CD8-positive, alpha-beta T cell (primary cell): ENCODE measurements at regions of chr3 and their contacts with region 1.

Region 1: GRCh38 chr3:161310649-161311423 is 60.5 kb downstream of the SPTSSB start:
- DNase-seq: peak; percentile 3 to 88 (median 42)
- ATAC-seq: peak; percentile 76
- H3K4me3 ChIP-seq: no peak overlapping the region
- H3K4me3 Mint-ChIP-seq: peak overlapping the region; percentile 58
- H3K27ac ChIP-seq: peak overlapping the region in 1 of 2 experiments; percentile 38
- H3K27ac Mint-ChIP-seq: peak overlapping the region; percentile 85
- H3K4me1 ChIP-seq: peaks cover 47% of the 10 kb centered on the region
- H3K4me1 Mint-ChIP-seq: peaks cover 64% of the 10 kb centered on the region
- H3K27me3 ChIP-seq: peaks cover 0 to 4% of the 10 kb centered on the region in 2 experiments
- H3K27me3 Mint-ChIP-seq: no peaks in the 10 kb centered on the region
- CTCF ChIP-seq: no peak

Region 2: DNA sequence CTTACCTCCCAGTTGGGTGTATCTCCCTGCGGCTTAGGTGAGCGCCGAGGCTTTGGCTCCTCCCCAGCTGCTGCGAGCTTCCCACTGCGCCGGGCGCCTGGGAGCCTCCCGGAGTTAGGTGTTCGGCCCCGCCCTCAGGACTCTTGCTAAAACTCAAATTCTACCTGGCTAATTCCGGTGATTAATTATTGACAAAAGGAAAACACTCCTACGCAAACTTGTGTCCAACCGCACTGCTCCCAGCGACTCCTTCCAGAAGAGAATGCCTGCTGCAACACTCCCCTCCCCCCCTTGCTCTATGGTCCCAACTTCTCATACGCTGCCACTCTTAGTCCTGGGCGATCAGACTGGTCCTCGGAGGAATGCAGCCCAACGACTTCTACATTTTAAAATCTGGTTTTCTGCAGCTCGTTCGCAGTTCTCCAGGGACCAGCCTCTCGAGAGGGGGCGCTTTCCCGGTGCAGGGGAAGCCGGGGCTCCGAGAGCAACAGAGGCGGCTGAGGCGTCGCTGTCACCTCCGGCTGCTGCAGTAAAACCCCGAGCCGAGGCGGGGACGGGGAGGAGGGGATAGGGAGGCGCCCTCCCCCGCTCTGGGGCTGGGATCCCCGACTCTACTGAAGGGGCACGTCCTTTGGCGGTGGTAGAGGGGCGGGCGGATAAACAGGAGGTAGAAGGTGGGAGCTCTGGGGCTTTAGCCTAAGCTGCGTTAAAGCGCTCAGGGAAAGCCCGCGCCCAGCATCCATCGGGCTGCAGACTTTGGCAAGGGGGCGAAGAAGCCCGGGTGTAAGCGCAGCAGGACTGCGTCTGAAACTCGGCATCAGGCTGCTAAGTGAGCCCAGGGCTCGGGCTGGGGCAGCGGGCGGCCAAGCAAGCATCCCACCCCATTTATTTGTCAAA is 60.8 kb after region 1 on chr3 and contains the start of gene SPTSSB:
- CTCF ChIA-PET with region 1: interaction called, 5 read pairs
- POLR2A ChIA-PET with region 1: interaction called, 6 read pairs
- intact Hi-C with region 1: loop called in 1 of 2 experiments (anchors 2 kb)
- DNase-seq: peak; percentile 3 to 72 (median 56)
- ATAC-seq: peak; percentile 75
- H3K4me3 ChIP-seq: peak within 1 kb of the TSS; percentile 54 to 57
- H3K4me3 Mint-ChIP-seq: peak within 1 kb of the TSS; percentile 87
- H3K27ac ChIP-seq: no peak within 1 kb of the TSS
- H3K27ac Mint-ChIP-seq: no peak within 1 kb of the TSS
- H3K4me1 ChIP-seq: peaks cover 13% of the 10 kb centered on the region
- H3K4me1 Mint-ChIP-seq: peaks cover 16% of the 10 kb centered on the region
- H3K27me3 ChIP-seq: peaks cover 13 to 16% of the 10 kb centered on the region in 2 experiments
- H3K27me3 Mint-ChIP-seq: peaks cover 27% of the 10 kb centered on the region
- CTCF ChIP-seq: no peak
- total RNA-seq, gene SPTSSB: not detected